IMR-90 (cell line): ENCODE measurements at regions of chr2 and their contacts with region 1.

Region 1: DNA sequence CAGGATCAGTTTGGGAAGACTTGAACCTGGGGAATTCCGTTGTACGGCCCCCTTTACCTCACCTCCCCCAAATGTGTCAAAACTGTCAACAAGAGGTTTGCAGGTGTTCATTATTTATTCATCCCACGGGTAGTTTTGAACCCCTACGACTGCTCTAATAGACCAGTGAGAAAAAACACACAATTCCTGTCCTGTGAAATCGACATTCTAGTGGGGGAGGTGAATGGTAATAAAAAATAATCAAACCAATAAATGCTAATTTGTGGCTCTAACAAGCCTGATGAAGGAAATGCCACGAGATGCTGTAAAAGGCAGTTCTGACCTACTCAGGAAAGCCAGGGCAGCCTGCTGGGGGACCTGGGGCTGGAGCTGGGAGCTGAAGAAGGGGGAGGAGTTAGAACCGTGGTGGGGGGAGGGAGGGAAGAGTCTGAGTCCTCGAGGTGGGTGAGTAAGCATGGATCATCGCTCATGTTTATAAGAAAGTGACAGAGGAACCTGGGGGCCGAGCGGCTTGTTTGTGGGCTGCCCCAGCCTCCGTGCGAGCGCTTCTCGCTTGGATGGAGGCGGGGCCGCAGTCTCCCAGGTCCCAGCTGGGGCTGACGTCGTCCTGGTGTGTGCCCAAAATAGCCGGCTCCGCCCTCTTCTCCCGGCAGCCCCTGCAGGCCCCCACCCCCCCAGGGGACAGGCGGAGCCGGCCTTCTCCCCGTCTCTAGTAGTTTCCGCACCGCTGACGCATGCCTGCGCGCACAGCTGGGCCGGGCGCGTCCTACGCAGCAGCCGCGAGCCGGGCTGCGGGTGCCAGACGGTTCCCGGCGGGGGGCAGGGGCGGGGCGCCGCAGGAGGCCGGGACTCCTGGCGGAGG is at the start of gene DNAJB2:
- DNase-seq: peak; percentile 99
- ATAC-seq: peak; percentile 91
- H3K4me3 ChIP-seq: peak within 1 kb of the TSS; percentile 65
- H3K27ac ChIP-seq: peak within 1 kb of the TSS; percentile 82
- H3K4me1 ChIP-seq: peaks cover 18% of the 10 kb centered on the region
- H3K27me3 ChIP-seq: no peaks in the 10 kb centered on the region
- CTCF ChIP-seq: no peak
- POLR2A ChIP-seq: peak; percentile 89
- RAD21 ChIP-seq: peak; percentile 32; the same call in 1 of the 2 replicates
- total RNA-seq, gene DNAJB2: 30.6 and 43.0 TPM in 2 replicates

Region 2: GRCh38 chr2:219177552-219178376 is 101.1 kb before region 1 on chr2 and contains the start of gene RETREG2:
- CTCF ChIA-PET with region 1: interaction called, 3 read pairs
- POLR2A ChIA-PET with region 1: interaction called, 3 read pairs
- dilution Hi-C with region 1: no loop called
- in situ Hi-C with region 1: no loop called
- intact Hi-C with region 1: loop called (anchors 5 kb)
- DNase-seq: peak; percentile 89
- ATAC-seq: peak; percentile 73
- H3K4me3 ChIP-seq: peak within 1 kb of the TSS; percentile 64
- H3K27ac ChIP-seq: peak within 1 kb of the TSS; percentile 96
- H3K4me1 ChIP-seq: 0 out of 2 replicates have a peak, but pooled peaks cover 6% of the 10 kb centered on the region
- H3K27me3 ChIP-seq: no peaks in the 10 kb centered on the region
- CTCF ChIP-seq: peak; percentile 56
- POLR2A ChIP-seq: peak; percentile 89
- RAD21 ChIP-seq: 0 out of 2 replicates have a peak, but pooled peaks have one; percentile 4
- total RNA-seq, gene RETREG2: 39.2 and 51.1 TPM in 2 replicates

Region 3: DNA sequence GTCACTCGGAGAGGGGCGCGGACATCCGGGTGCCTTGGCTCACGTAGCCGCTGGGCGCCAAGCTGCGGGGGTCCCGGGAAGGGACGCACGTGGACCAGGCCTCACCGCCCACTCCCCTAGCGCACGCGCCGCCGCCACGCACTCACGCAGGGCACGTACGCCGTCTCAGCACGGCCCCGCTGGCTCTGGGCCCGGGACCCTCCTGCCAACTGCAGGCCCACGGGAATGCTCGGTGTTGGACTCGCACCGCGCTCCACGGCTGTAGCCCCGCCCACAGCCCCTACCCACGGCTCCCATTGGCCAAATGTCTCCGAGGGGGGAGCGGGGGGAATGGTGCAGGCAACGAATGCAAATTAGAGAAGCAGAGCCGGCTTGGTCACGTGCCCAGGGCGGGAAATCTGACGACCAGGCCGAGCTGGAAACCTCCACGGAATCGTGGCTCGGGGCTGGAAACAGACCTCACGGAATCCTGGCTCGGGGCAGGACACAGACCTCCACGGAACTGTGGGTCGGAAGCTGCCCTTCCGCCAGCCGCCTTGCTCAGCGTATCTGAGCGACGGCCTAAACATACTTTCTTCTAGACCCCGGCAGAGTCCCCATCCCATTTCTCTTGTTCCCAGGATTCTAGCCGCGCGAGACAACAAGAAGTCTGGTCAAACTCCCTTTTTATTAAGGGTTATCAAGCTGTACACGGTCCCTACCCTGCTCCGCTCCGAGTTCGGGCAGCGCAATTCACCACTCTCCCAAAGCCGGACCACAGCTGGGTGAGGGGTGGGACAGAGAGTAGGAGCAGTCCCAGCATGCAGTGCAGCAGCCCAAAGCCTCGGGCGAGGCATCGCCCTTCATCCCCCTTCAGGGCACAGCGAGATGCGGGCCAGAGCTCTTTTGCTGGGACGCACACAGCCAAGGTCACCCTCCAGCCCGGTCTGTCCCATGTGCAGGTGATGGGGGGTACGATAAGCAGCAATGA is 59.9 kb before region 1 on chr2 and contains the start of gene ABCB6:
- CTCF ChIA-PET with region 1: interaction called, 6 read pairs
- POLR2A ChIA-PET with region 1: no interaction called
- dilution Hi-C with region 1: no loop called
- in situ Hi-C with region 1: no loop called
- intact Hi-C with region 1: loop called (anchors 2 kb)
- DNase-seq: peak; percentile 90
- ATAC-seq: peak; percentile 89
- H3K4me3 ChIP-seq: peak within 1 kb of the TSS; percentile 54
- H3K27ac ChIP-seq: peak within 1 kb of the TSS; percentile 92
- H3K4me1 ChIP-seq: peaks cover 5% of the 10 kb centered on the region; the same call in 1 of the 2 replicates
- H3K27me3 ChIP-seq: no peaks in the 10 kb centered on the region
- CTCF ChIP-seq: no peak
- POLR2A ChIP-seq: no peak; the same call in 1 of the 2 replicates
- RAD21 ChIP-seq: no peak
- total RNA-seq, gene ABCB6: 10.8 and 12.5 TPM in 2 replicates